ENCODE measurements at regions of chr11 and their contacts with region 1.

Region 1: GRCh38 chr11:67252831-67253239 is 13.4 kb upstream of the GRK2 start:
- DNase-seq: no peak
- H3K4me3 ChIP-seq: no peak overlapping the region
- CTCF ChIP-seq: peak; percentile 36

Region 2: DNA sequence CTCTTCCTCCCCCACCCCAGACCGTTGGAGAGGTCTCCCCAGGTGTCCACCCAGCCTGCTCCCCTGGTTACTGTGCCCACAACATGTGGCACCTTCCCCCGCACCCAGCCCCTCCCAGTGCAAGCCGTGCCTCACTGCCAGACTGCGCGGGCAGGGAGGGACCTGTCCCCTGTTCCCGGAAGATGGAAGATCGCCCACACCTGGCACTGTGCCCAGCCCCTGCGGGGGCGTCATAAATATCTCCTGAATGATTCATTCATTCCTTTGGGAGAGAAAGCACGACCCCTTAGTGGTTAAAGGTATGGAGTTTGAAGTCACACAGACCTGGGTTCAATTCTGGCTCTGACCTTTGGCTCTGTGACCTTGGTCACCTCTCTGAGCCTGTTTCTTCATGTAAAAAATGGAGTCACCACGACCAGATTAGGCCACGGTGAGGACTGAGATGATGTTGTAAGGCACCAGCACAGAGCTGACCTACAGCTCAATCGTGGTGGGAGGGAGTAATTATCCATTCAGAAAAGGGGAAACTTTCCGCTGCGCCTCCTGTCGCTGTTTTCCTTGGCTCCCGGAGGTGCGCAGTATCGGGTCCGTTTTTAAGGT is 230.4 kb before region 1 on chr11:
- CTCF ChIA-PET with region 1: no interaction called
- POLR2A ChIA-PET with region 1: no interaction called
- DNase-seq: no peak
- H3K4me3 ChIP-seq: peak overlapping the region; percentile 53
- CTCF ChIP-seq: no peak

Region 3: DNA sequence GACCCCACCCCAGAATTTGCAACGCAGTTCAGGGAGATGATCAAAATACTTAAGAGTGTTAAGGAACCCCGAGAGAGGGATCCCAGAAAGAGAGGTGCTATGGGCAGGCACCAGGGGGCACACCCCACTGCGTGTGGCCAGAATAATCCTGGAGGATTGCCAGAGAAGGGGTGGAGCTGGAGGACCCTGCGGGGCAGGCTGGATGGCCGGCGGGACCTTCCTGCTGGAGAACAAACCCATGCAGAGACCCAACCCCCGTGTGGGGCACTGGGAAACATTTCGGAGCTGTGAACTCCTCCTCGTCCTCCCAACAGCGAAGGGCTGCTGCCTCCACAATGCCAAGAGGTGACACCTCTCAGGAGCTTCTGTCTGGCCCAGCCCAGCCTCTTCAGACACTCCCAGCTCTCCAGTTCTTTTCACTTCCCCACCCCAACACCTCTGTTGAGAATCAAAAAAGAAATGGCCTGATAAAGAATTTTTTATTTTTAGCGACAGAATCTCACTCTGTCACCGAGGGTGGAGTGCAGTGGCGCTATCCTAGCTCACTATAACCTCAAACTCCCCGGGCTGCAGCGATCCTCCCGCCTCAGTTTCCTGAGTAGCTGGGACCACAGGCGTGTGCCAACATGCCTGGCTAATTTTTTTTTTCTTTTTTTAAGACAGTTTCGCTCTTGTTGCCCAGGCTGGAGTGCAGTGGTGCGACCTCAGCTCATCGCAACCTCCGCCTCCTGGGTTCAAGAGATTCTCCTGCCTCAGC is 170.6 kb before region 1 on chr11:
- CTCF ChIA-PET with region 1: interaction called, 15 read pairs
- POLR2A ChIA-PET with region 1: no interaction called
- DNase-seq: no peak
- H3K4me3 ChIP-seq: no peak overlapping the region
- CTCF ChIP-seq: no peak

Measured in AG04449 (cell line).